ENCODE measurements at regions of chr9 and their contacts with region 1.

Region 1: DNA sequence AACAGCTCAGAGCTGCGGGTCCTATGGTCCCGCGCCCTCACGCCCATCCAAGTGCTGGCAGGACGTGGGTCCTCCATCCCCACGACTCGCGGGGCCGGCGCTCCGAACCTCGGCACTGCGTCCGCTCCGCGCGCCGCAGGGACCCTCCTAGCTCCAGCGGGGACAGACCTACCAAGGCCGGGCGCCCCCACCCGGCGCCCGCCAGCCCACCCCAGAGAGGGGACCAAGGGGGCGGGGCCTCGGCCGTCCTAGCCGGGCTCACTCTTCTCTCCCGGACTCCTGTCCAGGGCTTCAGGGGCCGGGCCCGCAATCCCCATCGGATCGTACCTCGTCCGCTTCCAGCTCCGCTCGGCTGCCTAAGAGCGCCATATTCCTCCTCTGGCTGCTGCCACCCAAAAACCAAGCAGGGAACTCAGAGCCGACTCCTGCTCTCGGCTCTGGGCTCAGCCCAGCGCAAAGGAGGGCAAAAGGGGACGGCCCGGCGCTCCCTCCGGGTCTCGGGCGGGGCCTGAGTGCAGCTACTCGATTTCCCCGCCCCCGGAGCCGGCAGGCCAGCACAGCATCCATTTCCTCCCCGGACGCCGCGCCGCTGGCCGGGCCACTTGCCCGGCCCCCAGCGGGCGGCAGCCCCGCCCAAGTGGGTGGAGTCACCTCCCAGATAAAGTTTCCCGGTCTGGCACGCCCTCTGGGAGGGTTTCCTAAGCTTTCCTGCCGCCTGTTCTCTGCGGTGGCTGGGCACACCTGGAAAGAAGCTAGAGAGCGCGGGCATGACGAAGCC is at the start of gene TTC39B:
- DNase-seq: peak; percentile 61 to 86 (median 78)
- H3K4me3 ChIP-seq: peak within 1 kb of the TSS; percentile 81
- H3K4me3 Mint-ChIP-seq: peak within 1 kb of the TSS; percentile 97 to 100 (median 99)
- H3K27ac ChIP-seq: peak within 1 kb of the TSS; percentile 71
- H3K27ac Mint-ChIP-seq: peak within 1 kb of the TSS; percentile 80 to 98 (median 95)
- H3K4me1 ChIP-seq: peaks cover 47% of the 10 kb centered on the region
- H3K4me1 Mint-ChIP-seq: peaks cover 41 to 60% (median 52%) of the 10 kb centered on the region in 3 donors
- H3K27me3 ChIP-seq: no peaks in the 10 kb centered on the region
- H3K27me3 Mint-ChIP-seq: no peaks in the 10 kb centered on the region
- total RNA-seq, gene TTC39B: 11.3 to 12.1 TPM

Region 2: DNA sequence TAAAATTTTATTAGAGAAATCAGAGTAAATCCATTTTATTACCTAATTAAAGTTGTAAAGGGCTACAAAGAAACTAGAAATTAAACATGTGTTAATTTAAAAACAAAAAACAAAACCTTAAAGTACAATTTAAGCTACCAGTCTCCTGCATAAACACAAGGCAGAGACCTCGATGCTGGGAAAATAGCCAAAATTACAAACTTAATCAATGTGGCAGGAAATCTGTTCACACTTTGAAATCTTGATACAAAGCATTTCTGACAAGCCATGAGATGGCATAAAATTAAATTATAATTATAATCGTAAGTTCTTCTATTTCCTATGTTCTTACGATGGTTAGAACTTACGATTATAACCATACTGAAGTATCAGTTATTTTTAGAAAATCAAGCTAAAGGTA is 238.7 kb before region 1 on chr9:
- CTCF ChIA-PET with region 1: no interaction called
- POLR2A ChIA-PET with region 1: no interaction called
- DNase-seq: no peak
- H3K4me3 ChIP-seq: no peak overlapping the region
- H3K4me3 Mint-ChIP-seq: no peak overlapping the region
- H3K27ac ChIP-seq: no peak overlapping the region
- H3K27ac Mint-ChIP-seq: no peak overlapping the region
- H3K4me1 ChIP-seq: no peaks in the 10 kb centered on the region
- H3K4me1 Mint-ChIP-seq: no peaks in the 10 kb centered on the region
- H3K27me3 ChIP-seq: no peaks in the 10 kb centered on the region
- H3K27me3 Mint-ChIP-seq: peaks cover 4 to 22% of the 10 kb centered on the region in 2 donors

Region 3: DNA sequence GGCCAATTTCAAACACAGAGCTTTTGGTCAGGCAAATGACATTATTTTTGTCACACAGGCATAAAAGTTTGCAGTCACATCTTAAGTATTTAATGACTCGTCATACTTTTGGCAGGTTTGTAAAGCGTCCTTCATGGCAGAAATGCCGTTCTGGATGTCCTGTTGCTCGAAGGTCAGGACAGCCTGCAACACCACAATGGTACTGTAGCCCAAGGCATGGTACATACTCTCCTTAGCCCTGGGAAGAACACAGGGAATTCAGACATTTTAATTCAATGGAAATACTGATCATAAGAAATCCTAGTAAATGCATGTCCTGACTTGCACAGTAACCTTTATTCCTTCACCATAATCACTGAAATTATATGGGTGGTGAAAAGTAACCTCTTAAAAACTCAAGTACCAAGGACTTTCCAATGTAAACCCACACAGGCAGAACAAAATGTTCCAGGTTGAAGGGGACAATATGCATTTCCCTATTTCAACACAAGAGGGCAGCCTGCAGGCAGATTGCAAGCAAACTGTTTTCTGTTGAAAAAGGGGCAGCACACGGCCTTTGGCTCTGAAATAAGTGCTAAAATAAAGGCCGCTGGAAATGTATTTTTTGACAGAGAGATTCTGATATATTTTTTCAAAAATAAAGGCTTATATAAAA is 95.7 kb before region 1 on chr9:
- CTCF ChIA-PET with region 1: interaction called, 11 read pairs
- POLR2A ChIA-PET with region 1: no interaction called
- DNase-seq: peak; percentile 32 to 65 (median 43)
- H3K4me3 ChIP-seq: no peak overlapping the region
- H3K4me3 Mint-ChIP-seq: no peak overlapping the region
- H3K27ac ChIP-seq: no peak overlapping the region
- H3K27ac Mint-ChIP-seq: no peak overlapping the region
- H3K4me1 ChIP-seq: no peaks in the 10 kb centered on the region
- H3K4me1 Mint-ChIP-seq: peaks cover 7 to 19% (median 16%) of the 10 kb centered on the region in 3 donors
- H3K27me3 ChIP-seq: no peaks in the 10 kb centered on the region
- H3K27me3 Mint-ChIP-seq: no peaks in the 10 kb centered on the region

Region 4: DNA sequence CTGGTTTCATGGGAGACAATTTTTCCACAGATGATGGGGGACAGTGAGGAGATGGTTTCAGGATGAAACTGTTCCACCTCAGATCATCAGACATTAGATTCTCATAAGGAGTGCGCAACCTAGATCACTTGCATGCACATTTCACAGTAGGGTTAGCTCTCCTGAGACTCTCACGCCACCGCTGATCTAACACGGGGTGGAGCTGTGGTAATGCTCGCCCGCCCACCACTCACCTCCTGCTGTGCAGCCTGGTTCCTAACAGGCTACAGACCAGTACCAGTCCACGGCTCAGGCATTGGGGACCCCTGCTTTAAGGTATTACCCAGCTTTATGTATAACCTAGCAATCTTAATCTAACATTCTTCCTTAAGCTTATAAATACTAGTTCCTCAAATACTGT is 35.5 kb before region 1 on chr9:
- CTCF ChIA-PET with region 1: interaction called, 16 read pairs
- POLR2A ChIA-PET with region 1: no interaction called
- DNase-seq: peak in 4 of 5 donors; percentile 6 to 61 (median 16)
- H3K4me3 ChIP-seq: no peak overlapping the region
- H3K4me3 Mint-ChIP-seq: no peak overlapping the region
- H3K27ac ChIP-seq: no peak overlapping the region
- H3K27ac Mint-ChIP-seq: peak overlapping the region in 4 of 8 donors; percentile 5 to 87 (median 33)
- H3K4me1 ChIP-seq: peaks cover 11% of the 10 kb centered on the region
- H3K4me1 Mint-ChIP-seq: peaks cover 45 to 65% (median 55%) of the 10 kb centered on the region in 3 donors
- H3K27me3 ChIP-seq: no peaks in the 10 kb centered on the region
- H3K27me3 Mint-ChIP-seq: no peaks in the 10 kb centered on the region

Region 5: DNA sequence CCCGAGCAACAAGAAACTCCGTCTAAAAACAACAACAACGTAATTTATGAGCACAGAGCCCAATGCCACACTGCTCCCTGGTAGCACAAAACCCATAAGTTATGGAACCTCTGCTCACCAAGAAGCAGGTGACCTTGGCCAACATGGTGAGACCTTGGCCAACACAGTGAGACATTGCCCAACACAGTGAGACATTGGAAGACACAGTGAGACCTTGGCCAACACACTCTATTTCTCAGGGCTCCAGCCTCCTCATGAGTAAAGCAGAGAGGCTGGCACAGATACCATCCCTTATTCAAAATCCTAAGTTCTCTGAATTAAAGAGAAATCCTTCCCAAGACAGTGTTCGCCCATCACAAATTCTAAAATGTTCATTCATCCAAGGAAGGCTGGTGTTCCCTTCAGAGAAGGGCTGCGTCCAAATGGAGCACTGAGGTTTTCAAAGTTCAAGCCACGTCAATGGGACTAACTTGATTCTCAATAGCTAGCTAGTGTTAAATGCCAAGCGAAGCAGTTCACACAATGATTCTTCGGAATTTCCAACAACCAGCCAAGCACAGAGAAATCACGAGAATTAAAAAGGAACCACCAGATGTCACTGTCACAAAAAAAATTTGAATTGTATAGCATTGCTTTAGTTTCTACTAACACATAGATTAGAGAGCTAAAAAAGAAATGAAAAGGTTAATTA is 29.4 kb before region 1 on chr9:
- CTCF ChIA-PET with region 1: interaction called, 16 read pairs
- POLR2A ChIA-PET with region 1: no interaction called
- DNase-seq: peak in 1 of 5 donors; percentile 24
- H3K4me3 ChIP-seq: no peak overlapping the region
- H3K4me3 Mint-ChIP-seq: no peak overlapping the region
- H3K27ac ChIP-seq: no peak overlapping the region
- H3K27ac Mint-ChIP-seq: peak overlapping the region in 1 of 8 donors; percentile 60
- H3K4me1 ChIP-seq: peaks cover 11% of the 10 kb centered on the region
- H3K4me1 Mint-ChIP-seq: peaks cover 28 to 71% (median 56%) of the 10 kb centered on the region in 3 donors
- H3K27me3 ChIP-seq: no peaks in the 10 kb centered on the region
- H3K27me3 Mint-ChIP-seq: no peaks in the 10 kb centered on the region

Region 6: GRCh38 chr9:15295761-15296405 is 11.1 kb before region 1 on chr9:
- CTCF ChIA-PET with region 1: interaction called, 17 read pairs
- POLR2A ChIA-PET with region 1: interaction called, 22 read pairs
- DNase-seq: peak in 2 of 5 donors; percentile 56
- H3K4me3 ChIP-seq: peak overlapping the region; percentile 59
- H3K4me3 Mint-ChIP-seq: peak overlapping the region; percentile 79 to 93 (median 86)
- H3K27ac ChIP-seq: peak overlapping the region; percentile 75
- H3K27ac Mint-ChIP-seq: peak overlapping the region; percentile 92 to 99 (median 96)
- H3K4me1 ChIP-seq: peaks cover 81% of the 10 kb centered on the region
- H3K4me1 Mint-ChIP-seq: peaks cover 84 to 86% (median 85%) of the 10 kb centered on the region in 3 donors
- H3K27me3 ChIP-seq: no peaks in the 10 kb centered on the region
- H3K27me3 Mint-ChIP-seq: no peaks in the 10 kb centered on the region

Region 7: DNA sequence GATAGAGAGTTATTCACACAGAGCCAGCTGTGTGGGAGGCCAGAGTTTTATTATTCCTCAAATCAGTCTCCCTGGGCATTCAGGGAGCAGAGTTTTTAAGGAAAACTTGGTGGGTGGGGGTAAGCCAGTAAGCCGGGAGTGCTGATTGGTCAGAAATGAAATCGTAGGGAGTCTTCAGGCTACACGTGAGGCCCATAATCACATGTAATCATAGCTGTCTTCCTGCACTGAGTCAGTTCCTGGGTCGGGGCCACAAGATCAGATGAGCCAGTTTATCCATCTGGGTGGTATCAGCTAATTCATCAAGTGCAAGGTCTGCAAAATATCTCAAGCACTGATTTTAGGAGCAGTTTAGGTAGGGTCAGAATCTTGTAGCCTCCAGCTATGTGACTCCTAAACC is 10.9 kb after region 1 on chr9:
- CTCF ChIA-PET with region 1: no interaction called
- POLR2A ChIA-PET with region 1: no interaction called
- DNase-seq: no peak
- H3K4me3 ChIP-seq: no peak overlapping the region
- H3K4me3 Mint-ChIP-seq: no peak overlapping the region
- H3K27ac ChIP-seq: no peak overlapping the region
- H3K27ac Mint-ChIP-seq: no peak overlapping the region
- H3K4me1 ChIP-seq: no peaks in the 10 kb centered on the region
- H3K4me1 Mint-ChIP-seq: no peaks in the 10 kb centered on the region
- H3K27me3 ChIP-seq: no peaks in the 10 kb centered on the region
- H3K27me3 Mint-ChIP-seq: peaks cover 3 to 6% of the 10 kb centered on the region in 2 donors

Region 8: GRCh38 chr9:15346837-15347236 is 39.9 kb after region 1 on chr9:
- CTCF ChIA-PET with region 1: no interaction called
- POLR2A ChIA-PET with region 1: interaction called, 10 read pairs
- DNase-seq: no peak
- H3K4me3 ChIP-seq: no peak overlapping the region
- H3K4me3 Mint-ChIP-seq: no peak overlapping the region
- H3K27ac ChIP-seq: no peak overlapping the region
- H3K27ac Mint-ChIP-seq: peak overlapping the region in 1 of 8 donors; percentile 42
- H3K4me1 ChIP-seq: peaks cover 5% of the 10 kb centered on the region
- H3K4me1 Mint-ChIP-seq: peaks cover 4 to 7% (median 6%) of the 10 kb centered on the region in 3 donors
- H3K27me3 ChIP-seq: no peaks in the 10 kb centered on the region
- H3K27me3 Mint-ChIP-seq: no peaks in the 10 kb centered on the region

Measured in CD8-positive, alpha-beta memory T cell (primary cell).